A549 (cell line): ENCODE measurements at regions of chr10 and their contacts with region 1.

Region 1: GRCh38 chr10:117167789-117168674 is 29.3 kb upstream of the KCNK18 start:
- DNase-seq: peak; percentile 62 to 92
- ATAC-seq: peak; percentile 89 to 95
- H3K4me3 ChIP-seq: peak overlapping the region; percentile 55
- H3K27ac ChIP-seq: peak overlapping the region; percentile 71 to 86; a peak in 5 of 6 replicates
- H3K4me1 ChIP-seq: peaks cover 8% of the 10 kb centered on the region; the same call in 2 of the 3 replicates
- CTCF ChIP-seq: peak; percentile 94
- EP300 ChIP-seq: no peak
- POLR2A ChIP-seq: no peak
- RAD21 ChIP-seq: peak; percentile 55 to 72

Region 2: DNA sequence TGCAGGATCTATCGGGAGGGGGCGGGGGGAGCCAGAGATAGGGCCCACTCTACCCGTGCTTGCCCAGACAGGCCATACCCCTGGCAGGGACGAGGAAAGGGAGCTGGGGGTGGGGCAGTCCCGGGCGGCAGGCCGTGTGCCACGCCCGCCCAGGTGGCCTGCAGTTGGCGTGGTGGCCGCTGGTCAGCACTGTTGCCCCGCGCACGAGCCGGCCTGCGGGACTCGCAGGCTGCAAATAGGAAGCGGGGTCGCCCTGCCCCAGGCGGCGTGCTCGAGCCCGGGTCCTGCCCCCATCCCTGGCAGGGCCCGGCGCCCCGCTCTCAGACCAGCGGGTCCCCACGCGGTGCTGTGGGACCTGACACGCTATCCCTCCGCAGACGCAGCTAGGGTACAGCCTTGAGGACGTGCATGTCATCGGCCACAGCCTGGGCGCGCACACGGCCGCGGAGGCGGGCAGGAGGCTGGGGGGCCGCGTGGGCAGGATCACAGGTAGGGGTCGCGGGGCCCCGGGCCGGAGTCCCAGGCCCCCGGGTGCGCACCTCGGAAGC is 540.6 kb before region 1 on chr10:
- CTCF ChIA-PET with region 1: interaction called, 12 read pairs
- POLR2A ChIA-PET with region 1: no interaction called
- DNase-seq: peak; percentile 44 to 48
- ATAC-seq: peak; percentile 92 to 97
- H3K4me3 ChIP-seq: peak overlapping the region; percentile 56
- H3K27ac ChIP-seq: peak overlapping the region; percentile 58 to 74; a peak in 4 of 6 replicates
- H3K4me1 ChIP-seq: no peaks in the 10 kb centered on the region
- CTCF ChIP-seq: peak; percentile 52
- EP300 ChIP-seq: no peak
- POLR2A ChIP-seq: no peak
- RAD21 ChIP-seq: peak; percentile 47 to 67

Region 3: GRCh38 chr10:116836902-116837523 is 331.0 kb before region 1 on chr10:
- CTCF ChIA-PET with region 1: interaction called, 13 read pairs
- POLR2A ChIA-PET with region 1: no interaction called
- DNase-seq: no peak
- ATAC-seq: no peak
- H3K4me3 ChIP-seq: no peak overlapping the region
- H3K27ac ChIP-seq: no peak overlapping the region
- H3K4me1 ChIP-seq: peaks cover 13% of the 10 kb centered on the region; the same call in 1 of the 3 replicates
- CTCF ChIP-seq: no peak; the same call in 1 of the 3 replicates
- EP300 ChIP-seq: no peak
- POLR2A ChIP-seq: no peak
- RAD21 ChIP-seq: peak in 1 of 2 experiments; percentile 48; a peak in 4 of 5 replicates

Region 4: GRCh38 chr10:116913695-116914094 is 254.3 kb before region 1 on chr10:
- CTCF ChIA-PET with region 1: no interaction called
- POLR2A ChIA-PET with region 1: no interaction called
- DNase-seq: no peak
- ATAC-seq: no peak
- H3K4me3 ChIP-seq: no peak overlapping the region
- H3K27ac ChIP-seq: no peak overlapping the region
- H3K4me1 ChIP-seq: no peaks in the 10 kb centered on the region
- CTCF ChIP-seq: no peak
- EP300 ChIP-seq: no peak
- POLR2A ChIP-seq: no peak
- RAD21 ChIP-seq: no peak

Region 5: GRCh38 chr10:117112220-117112619 is 55.8 kb before region 1 on chr10:
- CTCF ChIA-PET with region 1: interaction called, 41 read pairs
- POLR2A ChIA-PET with region 1: no interaction called
- DNase-seq: peak in 1 of 2 experiments; percentile 21
- ATAC-seq: peak; percentile 71 to 82; a peak in 4 of 6 replicates
- H3K4me3 ChIP-seq: no peak overlapping the region
- H3K27ac ChIP-seq: no peak overlapping the region
- H3K4me1 ChIP-seq: no peaks in the 10 kb centered on the region
- CTCF ChIP-seq: peak; percentile 52
- EP300 ChIP-seq: no peak
- POLR2A ChIP-seq: no peak
- RAD21 ChIP-seq: peak; percentile 37 to 55; a peak in 4 of 5 replicates

Region 6: DNA sequence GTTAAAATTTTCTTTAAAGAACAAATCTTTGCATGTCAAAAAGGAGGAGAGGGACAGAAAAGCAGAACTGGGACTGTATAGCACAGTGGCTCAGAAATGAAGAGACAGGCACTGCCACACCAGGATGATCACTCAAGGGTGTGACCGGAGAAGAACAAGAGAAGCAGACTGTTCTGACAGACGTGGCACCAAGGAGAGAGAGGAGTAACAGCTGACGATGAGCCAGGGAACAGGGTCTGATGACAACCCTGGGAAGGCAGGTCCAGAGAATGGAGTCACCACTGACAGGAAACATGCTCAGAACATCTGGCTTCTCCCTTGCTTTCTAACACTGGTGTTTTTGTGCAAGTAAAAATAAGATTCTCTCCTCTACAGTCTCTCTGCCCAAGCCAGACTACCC is 15.4 kb before region 1 on chr10:
- CTCF ChIA-PET with region 1: interaction called, 21 read pairs
- POLR2A ChIA-PET with region 1: no interaction called
- DNase-seq: no peak
- ATAC-seq: peak; percentile 37 to 53; a peak in 2 of 6 replicates
- H3K4me3 ChIP-seq: no peak overlapping the region
- H3K27ac ChIP-seq: no peak overlapping the region
- H3K4me1 ChIP-seq: no peaks in the 10 kb centered on the region
- CTCF ChIP-seq: no peak
- EP300 ChIP-seq: no peak
- POLR2A ChIP-seq: no peak
- RAD21 ChIP-seq: no peak